Activated naive CD4-positive, alpha-beta T cell treated with anti-CD3 and anti-CD28 coated beads, Interleukin-2, amount 10 ng/mL, durations not matched to agents 7 days and 5 days (primary cell): ENCODE measurements at regions of chr3 and their contacts with region 1.

Region 1: GRCh38 chr3:12782172-12782815 is 14.2 kb upstream of the CAND2 start:
- DNase-seq: no peak
- H3K4me3 Mint-ChIP-seq: no peak overlapping the region
- H3K27ac Mint-ChIP-seq: no peak overlapping the region
- H3K4me1 Mint-ChIP-seq: no peaks in the 10 kb centered on the region
- H3K27me3 Mint-ChIP-seq: peaks cover 20% of the 10 kb centered on the region

Region 2: DNA sequence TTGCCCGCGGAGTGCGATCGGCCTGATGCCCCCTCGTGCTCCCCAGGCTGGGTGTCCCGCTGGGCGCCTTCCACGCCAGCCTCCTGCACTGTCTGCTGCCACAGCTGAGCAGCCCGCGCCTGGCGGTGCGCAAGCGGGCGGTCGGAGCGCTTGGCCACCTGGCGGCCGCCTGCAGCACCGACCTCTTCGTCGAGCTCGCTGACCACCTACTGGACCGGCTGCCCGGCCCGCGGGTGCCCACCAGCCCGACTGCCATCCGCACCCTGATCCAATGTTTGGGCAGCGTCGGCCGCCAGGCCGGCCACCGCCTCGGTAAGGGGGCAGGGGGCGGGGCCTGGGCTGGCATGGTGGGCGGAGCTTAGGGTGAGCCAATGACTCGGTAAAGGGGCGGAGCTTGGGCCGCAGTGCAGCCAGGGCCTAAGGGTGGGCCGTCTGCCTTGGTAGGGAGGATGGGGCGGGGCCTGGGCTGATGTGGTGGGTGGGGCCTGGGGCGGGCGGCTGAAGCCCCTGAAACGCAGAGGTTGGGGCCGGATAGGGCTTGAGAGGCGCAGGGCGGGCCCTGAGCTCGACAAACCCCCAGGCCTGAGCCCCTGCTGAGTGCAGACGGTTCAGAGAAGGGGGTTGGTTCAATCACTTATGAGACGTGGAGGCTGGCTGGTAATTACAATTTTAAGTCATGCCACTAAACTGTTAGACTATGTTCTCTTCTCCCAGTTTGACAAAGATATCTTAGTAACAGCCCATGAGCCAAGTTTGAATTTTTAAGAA is 27.9 kb after region 1 on chr3:
- CTCF ChIA-PET with region 1: interaction called, 24 read pairs
- DNase-seq: peak; percentile 96
- H3K4me3 Mint-ChIP-seq: peak overlapping the region; percentile 50
- H3K27ac Mint-ChIP-seq: no peak overlapping the region
- H3K4me1 Mint-ChIP-seq: peaks cover 5% of the 10 kb centered on the region
- H3K27me3 Mint-ChIP-seq: peaks cover 18% of the 10 kb centered on the region

Region 3: DNA sequence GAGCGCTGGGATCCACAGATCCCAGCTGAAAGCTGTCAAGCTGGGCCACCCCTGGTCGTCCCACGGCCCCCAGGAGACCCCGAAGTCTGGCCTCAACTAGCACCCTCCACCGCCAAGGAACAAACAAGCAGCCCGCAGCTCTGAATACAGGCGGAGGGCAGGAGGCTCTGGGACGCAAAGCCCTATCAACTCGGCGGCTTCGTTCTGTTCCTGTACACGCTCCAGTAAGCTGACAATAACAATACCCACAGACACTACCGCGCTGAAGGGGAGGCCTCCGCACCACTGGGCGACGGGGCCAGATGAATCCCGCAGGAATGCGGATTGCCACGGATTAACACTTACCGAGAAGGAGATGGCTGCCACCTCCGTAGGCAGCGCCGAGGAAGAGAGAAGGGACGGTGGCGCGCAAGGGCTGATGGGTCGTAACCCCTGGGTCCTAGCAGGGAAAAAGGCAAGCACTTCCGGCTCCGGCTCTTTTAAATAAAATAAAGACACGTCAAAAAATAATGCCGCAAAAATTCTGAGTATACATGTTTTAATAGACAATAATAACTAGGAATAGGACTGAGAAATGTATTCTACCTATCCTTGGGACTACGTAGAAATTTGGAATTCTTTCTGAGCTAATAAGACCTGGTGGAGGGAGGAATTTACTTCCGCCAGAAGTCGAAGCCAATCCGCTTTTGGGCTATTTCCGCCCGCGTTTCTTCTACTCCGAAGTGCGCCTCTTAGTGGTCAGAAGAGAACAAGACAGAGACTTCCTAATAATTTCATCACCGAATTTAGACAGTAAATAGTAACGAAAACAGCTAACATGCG is 59.1 kb after region 1 on chr3 and contains the start of gene RPL32:
- CTCF ChIA-PET with region 1: interaction called, 11 read pairs
- DNase-seq: peak; percentile 89
- H3K4me3 Mint-ChIP-seq: peak within 1 kb of the TSS; percentile 95
- H3K27ac Mint-ChIP-seq: peak within 1 kb of the TSS; percentile 98
- H3K4me1 Mint-ChIP-seq: peaks cover 49% of the 10 kb centered on the region
- H3K27me3 Mint-ChIP-seq: no peaks in the 10 kb centered on the region